A549 (cell line): ENCODE measurements at regions of chr2 and their contacts with region 1.

Region 1: GRCh38 chr2:44955593-44956392 is 14.3 kb downstream of the SIX3 start:
- DNase-seq: peak; percentile 79
- ATAC-seq: peak; percentile 75 to 87
- H3K4me3 ChIP-seq: peak overlapping the region; percentile 36
- H3K27ac ChIP-seq: peak overlapping the region; percentile 64 to 71; a peak in 4 of 6 replicates
- H3K4me1 ChIP-seq: peaks cover 25% of the 10 kb centered on the region
- CTCF ChIP-seq: peak; percentile 98
- EP300 ChIP-seq: no peak
- POLR2A ChIP-seq: no peak
- RAD21 ChIP-seq: peak; percentile 98 to 99

Region 2: DNA sequence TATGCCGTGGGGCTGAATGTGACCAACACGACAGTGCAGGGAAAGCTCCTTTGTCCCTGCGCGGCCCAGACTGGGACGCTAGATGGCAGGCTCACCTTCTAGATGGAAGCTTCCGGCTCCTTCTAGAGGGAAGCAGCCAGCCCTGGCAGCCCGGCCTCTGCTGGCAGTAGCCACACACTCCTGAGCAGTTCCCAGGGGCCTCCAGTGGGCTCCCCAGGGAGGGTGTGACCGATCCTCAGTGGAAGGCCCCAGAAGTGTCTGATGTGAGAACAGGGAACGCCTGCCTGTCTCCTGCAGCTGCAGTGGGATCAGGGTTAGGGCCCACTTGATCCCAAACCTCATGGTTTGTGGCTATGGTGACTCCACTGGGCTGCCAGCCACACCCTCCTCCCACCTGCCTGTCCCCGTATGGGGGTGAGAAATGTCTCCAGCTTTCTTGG is 911.5 kb before region 1 on chr2:
- CTCF ChIA-PET with region 1: interaction called, 47 read pairs
- POLR2A ChIA-PET with region 1: no interaction called
- DNase-seq: peak; percentile 91
- ATAC-seq: peak; percentile 100
- H3K4me3 ChIP-seq: no peak overlapping the region
- H3K27ac ChIP-seq: peak overlapping the region; percentile 67 to 87
- H3K4me1 ChIP-seq: peaks cover 4% of the 10 kb centered on the region
- CTCF ChIP-seq: peak; percentile 98
- EP300 ChIP-seq: no peak
- POLR2A ChIP-seq: no peak
- RAD21 ChIP-seq: peak; percentile 98

Region 3: DNA sequence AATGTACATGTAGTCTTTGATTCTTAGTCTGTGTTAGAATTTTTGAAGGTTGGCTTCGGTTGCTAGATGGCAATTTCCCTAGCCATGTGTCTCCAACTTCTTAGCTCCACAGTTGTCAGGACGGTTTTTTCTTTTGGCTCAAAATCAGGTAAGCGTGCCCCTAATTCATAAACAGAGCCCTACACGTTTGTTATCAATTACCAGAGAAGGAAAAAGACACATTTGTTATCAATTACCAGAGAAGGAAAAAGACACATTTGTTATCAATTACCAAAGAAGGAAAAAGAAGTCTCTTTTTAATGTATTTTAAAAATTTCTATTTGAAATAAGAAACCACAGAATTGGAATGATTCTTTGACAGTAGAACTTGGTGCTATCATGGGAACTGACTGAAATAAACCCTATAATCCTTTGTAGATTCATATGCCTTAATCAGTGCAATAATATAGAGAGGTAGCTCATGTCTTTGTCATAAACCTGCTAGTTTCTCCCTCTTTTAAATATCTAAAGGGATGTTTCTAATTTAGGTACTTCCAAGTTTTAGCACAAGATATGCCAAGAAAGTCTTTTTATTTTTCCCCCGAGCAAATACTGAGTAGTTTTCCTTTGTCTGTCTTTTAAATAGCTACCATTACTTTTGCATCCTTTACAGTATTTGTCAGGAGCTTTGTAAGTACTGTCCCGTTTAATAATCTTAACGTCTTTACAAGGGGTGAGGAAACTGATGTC is 558.2 kb before region 1 on chr2:
- CTCF ChIA-PET with region 1: interaction called, 184 read pairs
- POLR2A ChIA-PET with region 1: no interaction called
- DNase-seq: no peak
- ATAC-seq: no peak
- H3K4me3 ChIP-seq: no peak overlapping the region
- H3K27ac ChIP-seq: no peak overlapping the region
- H3K4me1 ChIP-seq: no peaks in the 10 kb centered on the region
- CTCF ChIP-seq: no peak
- EP300 ChIP-seq: no peak
- POLR2A ChIP-seq: no peak
- RAD21 ChIP-seq: no peak

Region 4: GRCh38 chr2:44770221-44771195 is 185.3 kb before region 1 on chr2:
- CTCF ChIA-PET with region 1: interaction called, 11 read pairs
- POLR2A ChIA-PET with region 1: no interaction called
- DNase-seq: no peak
- ATAC-seq: peak; percentile 41 to 53; a peak in 2 of 6 replicates
- H3K4me3 ChIP-seq: no peak overlapping the region
- H3K27ac ChIP-seq: no peak overlapping the region
- H3K4me1 ChIP-seq: no peaks in the 10 kb centered on the region; the same call in 2 of the 3 replicates
- CTCF ChIP-seq: peak; percentile 26; the same call in 1 of the 3 replicates
- EP300 ChIP-seq: no peak
- POLR2A ChIP-seq: no peak
- RAD21 ChIP-seq: 0 out of 5 replicates have a peak, but pooled peaks have one; percentile 17 to 27

Region 5: GRCh38 chr2:44897406-44897805 is 58.4 kb before region 1 on chr2:
- CTCF ChIA-PET with region 1: interaction called, 28 read pairs
- POLR2A ChIA-PET with region 1: no interaction called
- DNase-seq: peak in 1 of 2 experiments; percentile 37
- ATAC-seq: peak; percentile 39 to 66; a peak in 3 of 6 replicates
- H3K4me3 ChIP-seq: no peak overlapping the region
- H3K27ac ChIP-seq: no peak overlapping the region
- H3K4me1 ChIP-seq: no peaks in the 10 kb centered on the region
- CTCF ChIP-seq: peak; percentile 31; the same call in 2 of the 3 replicates
- EP300 ChIP-seq: no peak
- POLR2A ChIP-seq: no peak
- RAD21 ChIP-seq: peak; percentile 40 to 60; a peak in 4 of 5 replicates

Region 6: GRCh38 chr2:44941551-44942234 is 14.1 kb before region 1 on chr2 and contains the start of gene SIX3:
- CTCF ChIA-PET with region 1: interaction called, 33 read pairs
- POLR2A ChIA-PET with region 1: interaction called, 8 read pairs
- DNase-seq: peak in 1 of 2 experiments; percentile 75
- ATAC-seq: peak; percentile 35 to 44; a peak in 3 of 6 replicates
- H3K4me3 ChIP-seq: peak within 1 kb of the TSS; percentile 61
- H3K27ac ChIP-seq: peak within 1 kb of the TSS; percentile 70 to 76
- H3K4me1 ChIP-seq: peaks cover 25% of the 10 kb centered on the region
- CTCF ChIP-seq: no peak
- EP300 ChIP-seq: no peak
- POLR2A ChIP-seq: no peak
- RAD21 ChIP-seq: no peak
- polyA plus RNA-seq, gene SIX3: 0.12 and 0.22 TPM in 2 replicates

Region 7: DNA sequence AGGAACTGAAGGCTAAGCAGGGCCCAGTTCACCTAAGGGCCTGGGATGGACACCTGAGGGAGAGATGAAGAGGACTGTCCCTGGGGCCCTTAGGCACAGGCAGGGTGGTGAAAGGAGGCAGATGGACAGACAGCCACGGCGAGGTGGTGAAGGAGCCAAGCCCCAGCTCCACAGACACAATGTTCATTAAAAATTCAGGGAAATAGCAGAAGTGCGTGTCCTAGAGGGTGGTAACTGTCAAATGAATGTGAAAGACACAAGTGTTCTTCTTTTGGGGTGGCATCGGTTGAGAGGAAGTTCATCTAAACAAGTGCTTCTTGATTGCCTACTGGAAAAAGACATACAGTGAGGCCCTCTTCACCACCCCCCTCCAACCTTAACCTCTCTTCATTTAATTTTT is 129.7 kb after region 1 on chr2:
- CTCF ChIA-PET with region 1: no interaction called
- POLR2A ChIA-PET with region 1: no interaction called
- DNase-seq: no peak
- ATAC-seq: no peak
- H3K4me3 ChIP-seq: no peak overlapping the region
- H3K27ac ChIP-seq: no peak overlapping the region
- H3K4me1 ChIP-seq: no peaks in the 10 kb centered on the region
- CTCF ChIP-seq: no peak
- EP300 ChIP-seq: no peak
- POLR2A ChIP-seq: peak; percentile 14; the same call in 1 of the 2 replicates
- RAD21 ChIP-seq: no peak

Region 8: GRCh38 chr2:45105050-45105582 is 149.3 kb after region 1 on chr2:
- CTCF ChIA-PET with region 1: no interaction called
- POLR2A ChIA-PET with region 1: no interaction called
- DNase-seq: no peak
- ATAC-seq: no peak
- H3K4me3 ChIP-seq: no peak overlapping the region
- H3K27ac ChIP-seq: no peak overlapping the region
- H3K4me1 ChIP-seq: no peaks in the 10 kb centered on the region
- CTCF ChIP-seq: no peak
- EP300 ChIP-seq: no peak
- POLR2A ChIP-seq: no peak
- RAD21 ChIP-seq: no peak